T-cell (primary cell): ENCODE measurements at regions of chr3 and their contacts with region 1.

Region 1: GRCh38 chr3:38084334-38085310 is 45.6 kb downstream of the DLEC1 start:
- DNase-seq: peak in 31 of 35 experiments; percentile 8 to 61 (median 38)
- ATAC-seq: peak in 3 of 4 experiments; percentile 15 to 68 (median 65)
- H3K4me3 ChIP-seq: no peak overlapping the region
- H3K4me3 Mint-ChIP-seq: peak overlapping the region in 1 of 3 donors; percentile 39
- H3K27ac ChIP-seq: peak overlapping the region; percentile 11
- H3K27ac Mint-ChIP-seq: peak overlapping the region; percentile 79 to 85
- H3K4me1 ChIP-seq: no peaks in the 10 kb centered on the region
- H3K4me1 Mint-ChIP-seq: peaks cover 0 to 13% (median 3%) of the 10 kb centered on the region in 3 donors
- H3K27me3 ChIP-seq: no peaks in the 10 kb centered on the region
- H3K27me3 Mint-ChIP-seq: no peaks in the 10 kb centered on the region

Region 2: DNA sequence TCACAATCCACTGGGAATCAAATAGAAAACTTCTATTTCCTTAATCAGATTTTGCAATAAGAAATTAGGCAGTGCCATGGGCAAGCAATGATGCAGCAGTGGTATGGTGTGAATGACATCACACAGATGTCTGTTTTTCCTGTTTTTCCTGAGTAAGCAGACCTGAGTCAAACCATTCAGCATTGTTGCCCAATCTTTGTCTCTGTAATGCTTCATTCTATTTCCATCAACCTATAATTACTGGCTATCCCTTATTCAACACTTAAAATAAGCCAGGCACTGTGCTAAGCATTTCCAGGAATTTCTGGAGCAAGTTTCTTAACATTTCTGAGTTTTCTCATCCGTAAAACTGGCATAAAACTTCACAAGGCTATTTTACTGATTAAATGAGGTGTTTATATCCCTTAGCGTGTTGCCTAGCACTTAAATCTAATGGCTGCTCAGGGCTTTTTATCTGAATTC is 69.4 kb after region 1 on chr3:
- CTCF ChIA-PET with region 1: no interaction called
- POLR2A ChIA-PET with region 1: no interaction called
- DNase-seq: no peak
- ATAC-seq: no peak
- H3K4me3 ChIP-seq: no peak overlapping the region
- H3K4me3 Mint-ChIP-seq: no peak overlapping the region
- H3K27ac ChIP-seq: no peak overlapping the region
- H3K27ac Mint-ChIP-seq: no peak overlapping the region
- H3K4me1 ChIP-seq: peaks cover 0 to 19% of the 10 kb centered on the region in 2 experiments
- H3K4me1 Mint-ChIP-seq: peaks cover 15 to 37% (median 26%) of the 10 kb centered on the region in 3 donors
- H3K27me3 ChIP-seq: no peaks in the 10 kb centered on the region
- H3K27me3 Mint-ChIP-seq: no peaks in the 10 kb centered on the region

Region 3: GRCh38 chr3:39086144-39086543 is 1001.5 kb after region 1 on chr3:
- CTCF ChIA-PET with region 1: no interaction called
- POLR2A ChIA-PET with region 1: no interaction called
- DNase-seq: no peak
- ATAC-seq: no peak
- H3K4me3 ChIP-seq: no peak overlapping the region
- H3K4me3 Mint-ChIP-seq: no peak overlapping the region
- H3K27ac ChIP-seq: no peak overlapping the region
- H3K27ac Mint-ChIP-seq: peak overlapping the region in 1 of 2 donors; percentile 65
- H3K4me1 ChIP-seq: no peaks in the 10 kb centered on the region
- H3K4me1 Mint-ChIP-seq: peaks cover 0 to 3% (median 0%) of the 10 kb centered on the region in 3 donors
- H3K27me3 ChIP-seq: no peaks in the 10 kb centered on the region
- H3K27me3 Mint-ChIP-seq: no peaks in the 10 kb centered on the region

Region 4: GRCh38 chr3:39203862-39204261 is 1119.2 kb after region 1 on chr3:
- CTCF ChIA-PET with region 1: interaction called in 1 of 2 experiments, 10 read pairs
- POLR2A ChIA-PET with region 1: no interaction called
- DNase-seq: no peak
- ATAC-seq: no peak
- H3K4me3 ChIP-seq: no peak overlapping the region
- H3K4me3 Mint-ChIP-seq: no peak overlapping the region
- H3K27ac ChIP-seq: no peak overlapping the region
- H3K27ac Mint-ChIP-seq: no peak overlapping the region
- H3K4me1 ChIP-seq: peaks cover 0 to 3% of the 10 kb centered on the region in 2 experiments
- H3K4me1 Mint-ChIP-seq: peaks cover 0 to 8% (median 7%) of the 10 kb centered on the region in 3 donors
- H3K27me3 ChIP-seq: peaks cover 0 to 21% of the 10 kb centered on the region in 2 experiments
- H3K27me3 Mint-ChIP-seq: peaks cover 14 to 19% of the 10 kb centered on the region in 2 donors